ENCODE measurements at regions of chr12 and their contacts with region 1.

Region 1: DNA sequence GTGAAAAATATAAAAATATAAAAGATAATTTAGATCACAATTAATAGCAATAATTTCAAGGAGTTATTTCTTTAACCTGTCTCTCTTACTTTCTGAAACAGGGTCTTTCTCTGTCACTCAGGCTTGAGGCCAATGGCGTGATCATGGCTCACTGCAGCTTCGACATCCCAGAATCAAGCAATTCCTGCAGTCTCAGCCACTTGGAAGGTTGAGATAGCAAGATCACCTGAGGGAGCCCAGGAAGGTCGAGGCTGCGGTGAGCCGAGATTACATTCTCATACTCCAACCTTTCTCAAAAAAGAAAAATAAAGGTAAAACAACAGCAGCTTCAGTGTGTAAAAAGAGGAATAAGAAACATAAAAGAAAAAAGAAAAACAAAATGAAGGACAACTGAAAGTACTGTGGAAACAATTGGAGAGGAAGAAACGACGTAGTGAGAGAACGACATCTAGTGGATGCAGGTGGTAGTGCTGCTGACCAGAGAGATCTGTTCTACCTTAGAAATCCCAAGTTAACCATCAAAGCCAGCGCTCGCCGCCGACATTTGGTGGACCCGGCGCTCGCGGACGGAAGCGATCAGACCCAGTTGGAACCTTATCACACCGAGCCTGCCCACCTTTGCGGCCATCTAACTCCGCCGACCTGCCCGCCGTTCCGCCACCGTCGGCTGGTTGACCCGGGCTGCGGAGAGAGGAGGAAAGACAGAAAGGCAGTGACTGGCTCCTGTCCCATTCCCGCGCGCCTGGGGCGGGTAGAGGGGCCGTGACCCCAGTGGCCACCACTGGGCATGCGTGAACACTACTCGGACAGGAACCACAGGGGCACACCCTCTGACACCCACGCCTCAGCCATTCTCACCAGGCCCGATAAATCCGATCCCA is 196.1 kb downstream of the ALG10 start:
- DNase-seq: peak; percentile 60 to 62
- H3K4me3 ChIP-seq: no peak overlapping the region
- H3K27ac ChIP-seq: peak overlapping the region in 1 of 3 donors; percentile 38
- H3K4me1 ChIP-seq: no peaks in the 10 kb centered on the region
- H3K27me3 ChIP-seq: no peaks in the 10 kb centered on the region
- CTCF ChIP-seq: peak; percentile 41 to 89 (median 76)
- POLR2A ChIP-seq: no peak

Region 2: GRCh38 chr12:34126239-34126641 is 92.2 kb before region 1 on chr12:
- intact Hi-C with region 1: loop called (anchors 5 kb)
- DNase-seq: no peak
- H3K4me3 ChIP-seq: no peak overlapping the region
- H3K27ac ChIP-seq: no peak overlapping the region
- H3K4me1 ChIP-seq: no peaks in the 10 kb centered on the region
- H3K27me3 ChIP-seq: no peaks in the 10 kb centered on the region
- CTCF ChIP-seq: no peak
- POLR2A ChIP-seq: no peak